B cell (primary cell): ENCODE measurements at regions of chr7 and their contacts with region 1.

Region 1: GRCh38 chr7:128209229-128210035 is 31.6 kb upstream of the LEP start:
- DNase-seq: peak; percentile 85
- ATAC-seq: peak; percentile 88
- H3K4me3 ChIP-seq: no peak overlapping the region
- H3K4me3 Mint-ChIP-seq: no peak overlapping the region
- H3K27ac ChIP-seq: no peak overlapping the region
- H3K27ac Mint-ChIP-seq: no peak overlapping the region
- H3K4me1 ChIP-seq: peaks cover 0 to 7% of the 10 kb centered on the region in 2 donors
- H3K4me1 Mint-ChIP-seq: no peaks in the 10 kb centered on the region
- H3K27me3 ChIP-seq: peaks cover 0 to 4% (median 1%) of the 10 kb centered on the region in 4 experiments
- H3K27me3 Mint-ChIP-seq: peaks cover 19% of the 10 kb centered on the region
- CTCF ChIP-seq: peak; percentile 94

Region 2: DNA sequence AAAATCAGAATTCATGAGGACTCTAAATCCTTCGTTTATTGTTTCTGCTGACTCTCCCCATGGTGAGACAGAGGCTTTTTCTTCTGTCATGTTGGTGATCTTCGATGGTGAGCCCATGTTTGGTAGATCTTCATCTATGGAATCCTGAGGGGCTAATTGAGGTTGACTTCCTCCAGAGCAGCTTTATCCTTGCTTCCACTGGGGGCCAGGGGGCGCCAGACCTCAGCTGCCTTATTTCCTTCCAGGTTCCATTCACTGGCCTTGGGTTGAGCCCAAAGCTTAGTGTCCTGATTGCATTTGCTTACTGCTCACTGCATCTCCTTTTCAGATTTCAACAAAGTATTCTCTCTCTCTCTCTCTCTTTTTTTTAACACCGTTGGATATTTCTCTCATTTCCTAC is 704.7 kb before region 1 on chr7:
- CTCF ChIA-PET with region 1: interaction called, 4 read pairs
- POLR2A ChIA-PET with region 1: no interaction called
- intact Hi-C with region 1: loop called (anchors 5 kb)
- DNase-seq: peak; percentile 23
- ATAC-seq: no peak
- H3K4me3 ChIP-seq: no peak overlapping the region
- H3K4me3 Mint-ChIP-seq: no peak overlapping the region
- H3K27ac ChIP-seq: no peak overlapping the region
- H3K27ac Mint-ChIP-seq: no peak overlapping the region
- H3K4me1 ChIP-seq: no peaks in the 10 kb centered on the region
- H3K4me1 Mint-ChIP-seq: no peaks in the 10 kb centered on the region
- H3K27me3 ChIP-seq: peaks cover 0 to 8% (median 2%) of the 10 kb centered on the region in 4 experiments
- H3K27me3 Mint-ChIP-seq: peaks cover 35% of the 10 kb centered on the region
- CTCF ChIP-seq: peak; percentile 39

Region 3: GRCh38 chr7:127708788-127709187 is 500.6 kb before region 1 on chr7:
- CTCF ChIA-PET with region 1: interaction called, 456 read pairs
- POLR2A ChIA-PET with region 1: no interaction called
- intact Hi-C with region 1: no loop called
- DNase-seq: peak; percentile 82
- ATAC-seq: peak; percentile 66
- H3K4me3 ChIP-seq: no peak overlapping the region
- H3K4me3 Mint-ChIP-seq: no peak overlapping the region
- H3K27ac ChIP-seq: no peak overlapping the region
- H3K27ac Mint-ChIP-seq: no peak overlapping the region
- H3K4me1 ChIP-seq: no peaks in the 10 kb centered on the region
- H3K4me1 Mint-ChIP-seq: no peaks in the 10 kb centered on the region
- H3K27me3 ChIP-seq: no peaks in the 10 kb centered on the region
- H3K27me3 Mint-ChIP-seq: no peaks in the 10 kb centered on the region
- CTCF ChIP-seq: peak; percentile 89

Region 4: GRCh38 chr7:128003167-128003566 is 206.3 kb before region 1 on chr7:
- CTCF ChIA-PET with region 1: interaction called, 14 read pairs
- POLR2A ChIA-PET with region 1: no interaction called
- intact Hi-C with region 1: no loop called
- DNase-seq: peak; percentile 36
- ATAC-seq: peak; percentile 40
- H3K4me3 ChIP-seq: peak overlapping the region in 1 of 5 experiments; percentile 12
- H3K4me3 Mint-ChIP-seq: peak overlapping the region; percentile 65
- H3K27ac ChIP-seq: peak overlapping the region in 1 of 2 donors; percentile 28
- H3K27ac Mint-ChIP-seq: peak overlapping the region; percentile 86
- H3K4me1 ChIP-seq: peaks cover 38 to 47% of the 10 kb centered on the region in 2 donors
- H3K4me1 Mint-ChIP-seq: peaks cover 65% of the 10 kb centered on the region
- H3K27me3 ChIP-seq: no peaks in the 10 kb centered on the region
- H3K27me3 Mint-ChIP-seq: no peaks in the 10 kb centered on the region
- CTCF ChIP-seq: no peak

Region 5: GRCh38 chr7:128135515-128136214 is 73.8 kb before region 1 on chr7:
- CTCF ChIA-PET with region 1: interaction called, 180 read pairs
- POLR2A ChIA-PET with region 1: interaction called, 4 read pairs
- intact Hi-C with region 1: loop called (anchors 1 kb)
- DNase-seq: peak; percentile 79
- ATAC-seq: peak; percentile 96
- H3K4me3 ChIP-seq: peak overlapping the region; percentile 21 to 70 (median 65)
- H3K4me3 Mint-ChIP-seq: peak overlapping the region; percentile 84
- H3K27ac ChIP-seq: no peak overlapping the region
- H3K27ac Mint-ChIP-seq: no peak overlapping the region
- H3K4me1 ChIP-seq: peaks cover 17 to 22% of the 10 kb centered on the region in 2 donors
- H3K4me1 Mint-ChIP-seq: peaks cover 16% of the 10 kb centered on the region
- H3K27me3 ChIP-seq: peaks cover 0 to 38% (median 17%) of the 10 kb centered on the region in 4 experiments
- H3K27me3 Mint-ChIP-seq: peaks cover 35% of the 10 kb centered on the region
- CTCF ChIP-seq: peak; percentile 96

Region 6: DNA sequence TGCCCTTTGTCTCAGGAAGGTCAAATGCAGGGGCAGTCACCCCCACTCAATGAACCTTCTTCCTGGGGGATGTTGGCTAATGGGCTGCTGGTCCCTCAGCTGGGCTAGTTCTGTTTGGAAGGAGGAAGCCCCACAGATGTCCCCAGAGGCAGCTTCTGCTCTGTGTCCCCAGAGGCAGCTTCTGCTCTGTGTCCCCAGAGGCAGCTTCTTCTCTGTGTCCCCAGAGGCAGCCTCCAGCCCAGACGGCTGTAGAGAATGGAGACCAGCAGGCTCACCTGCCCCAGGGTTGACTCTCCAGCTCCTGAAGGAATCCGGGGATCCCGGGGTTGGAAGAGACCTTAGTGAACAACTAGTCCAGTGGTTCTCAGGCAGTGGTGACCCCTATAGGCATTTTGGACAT is 30.8 kb before region 1 on chr7:
- CTCF ChIA-PET with region 1: interaction called, 14 read pairs
- POLR2A ChIA-PET with region 1: no interaction called
- intact Hi-C with region 1: loop called (anchors 2 kb)
- DNase-seq: peak; percentile 70
- ATAC-seq: peak; percentile 100
- H3K4me3 ChIP-seq: no peak overlapping the region
- H3K4me3 Mint-ChIP-seq: peak overlapping the region; percentile 44
- H3K27ac ChIP-seq: no peak overlapping the region
- H3K27ac Mint-ChIP-seq: peak overlapping the region; percentile 72
- H3K4me1 ChIP-seq: peaks cover 29 to 35% of the 10 kb centered on the region in 2 donors
- H3K4me1 Mint-ChIP-seq: peaks cover 45% of the 10 kb centered on the region
- H3K27me3 ChIP-seq: peaks cover 0 to 18% (median 4%) of the 10 kb centered on the region in 4 experiments
- H3K27me3 Mint-ChIP-seq: peaks cover 47% of the 10 kb centered on the region
- CTCF ChIP-seq: no peak